ENCODE measurements at regions of chr13 and their contacts with region 1.

Region 1: GRCh38 chr13:44484562-44485138 is 91.5 kb downstream of the TSC22D1 start:
- DNase-seq: no peak
- H3K4me3 ChIP-seq: no peak overlapping the region
- CTCF ChIP-seq: no peak

Region 2: GRCh38 chr13:43730642-43731041 is 754.0 kb before region 1 on chr13:
- CTCF ChIA-PET with region 1: no interaction called
- POLR2A ChIA-PET with region 1: no interaction called
- DNase-seq: peak; percentile 23
- H3K4me3 ChIP-seq: no peak overlapping the region
- CTCF ChIP-seq: no peak

Region 3: DNA sequence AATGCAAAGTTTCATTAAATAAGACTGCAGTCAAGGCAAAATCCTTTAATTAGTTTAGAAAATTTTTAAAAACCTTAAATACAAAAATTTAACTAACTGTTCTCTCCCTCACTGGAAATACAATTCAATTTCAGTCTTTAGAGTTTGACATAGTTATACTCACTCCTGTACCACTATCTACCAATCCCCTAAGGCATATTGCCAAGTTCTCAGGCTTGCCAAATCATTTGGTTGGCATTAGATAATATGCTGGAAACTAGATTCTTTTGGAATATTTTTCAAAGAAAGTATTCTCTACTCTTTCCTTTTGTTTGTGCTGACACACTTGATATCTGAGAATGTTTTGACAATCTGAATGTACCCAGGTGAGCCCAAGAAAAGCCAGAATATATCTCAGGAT is 14.3 kb after region 1 on chr13:
- CTCF ChIA-PET with region 1: interaction called, 22 read pairs
- POLR2A ChIA-PET with region 1: no interaction called
- DNase-seq: no peak
- H3K4me3 ChIP-seq: no peak overlapping the region
- CTCF ChIP-seq: no peak

Region 4: GRCh38 chr13:44739120-44739519 is 254.5 kb after region 1 on chr13:
- CTCF ChIA-PET with region 1: no interaction called
- POLR2A ChIA-PET with region 1: no interaction called
- DNase-seq: no peak
- H3K4me3 ChIP-seq: no peak overlapping the region
- CTCF ChIP-seq: no peak

Region 5: DNA sequence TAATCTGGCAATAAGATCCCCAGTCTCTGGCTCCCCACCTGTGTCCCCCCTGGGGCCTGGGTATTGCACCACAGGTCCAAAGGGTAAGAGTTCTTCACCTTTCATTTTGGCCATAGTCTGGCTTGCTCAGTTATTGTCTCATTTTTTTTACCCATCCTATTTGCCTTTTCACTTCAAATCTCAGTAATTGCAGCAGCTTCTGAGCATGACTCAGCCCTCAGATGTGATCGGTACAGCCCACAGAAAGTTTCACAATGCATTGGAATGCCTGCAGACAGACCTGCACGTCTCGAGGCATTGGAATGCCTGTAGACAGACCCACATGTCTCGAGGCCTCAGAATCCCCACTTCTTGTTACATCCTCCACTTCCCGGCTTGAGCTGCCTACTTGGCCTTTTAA is 331.0 kb after region 1 on chr13:
- CTCF ChIA-PET with region 1: interaction called, 15 read pairs
- POLR2A ChIA-PET with region 1: no interaction called
- DNase-seq: peak; percentile 90
- H3K4me3 ChIP-seq: no peak overlapping the region
- CTCF ChIP-seq: no peak

Region 6: GRCh38 chr13:44917589-44918325 is 433.1 kb after region 1 on chr13:
- CTCF ChIA-PET with region 1: interaction called, 13 read pairs
- POLR2A ChIA-PET with region 1: no interaction called
- DNase-seq: peak; percentile 87
- H3K4me3 ChIP-seq: peak overlapping the region; percentile 65
- CTCF ChIP-seq: peak; percentile 26

Region 7: DNA sequence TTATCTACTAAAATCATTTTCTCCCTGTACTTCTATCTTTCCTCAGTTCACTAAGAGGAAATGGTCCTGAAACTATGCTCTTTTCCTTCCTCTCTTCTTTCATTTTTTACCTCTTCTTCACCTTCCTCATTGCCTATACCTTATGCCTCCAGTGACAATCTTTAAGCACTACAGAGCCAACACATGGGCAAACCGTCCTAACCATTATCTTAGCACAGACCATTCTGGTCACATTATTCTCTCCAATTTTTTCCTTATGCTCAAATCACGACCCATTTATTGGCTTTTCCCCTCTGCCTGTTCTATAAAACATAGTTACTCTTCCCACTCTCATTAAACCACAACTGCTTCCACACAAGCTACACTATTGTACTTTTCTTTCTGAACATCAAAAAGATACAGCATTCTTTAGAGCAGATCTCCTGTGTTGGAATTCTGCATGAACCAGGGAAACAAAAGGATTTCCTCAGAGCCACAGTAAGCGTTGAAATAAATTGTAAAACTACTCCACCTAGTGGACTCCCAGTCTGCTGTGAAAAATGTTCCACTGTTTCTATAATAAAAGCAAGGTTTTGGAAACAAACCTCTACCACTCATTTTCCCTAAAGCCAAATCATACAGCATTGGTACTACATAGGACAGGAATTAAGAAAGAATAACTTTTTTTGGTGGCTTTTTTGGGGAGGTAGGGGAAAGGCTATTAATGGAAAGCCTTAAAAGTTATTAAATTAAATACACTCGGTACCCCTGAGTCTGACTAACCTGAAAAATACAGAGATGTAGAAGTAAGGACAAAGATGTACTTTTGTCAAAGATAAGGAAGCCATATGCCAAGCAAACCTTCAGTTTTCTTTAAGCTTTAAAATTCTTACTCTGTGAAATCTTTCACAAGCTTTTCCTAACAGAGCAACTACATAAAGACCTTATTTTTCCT is 485.2 kb after region 1 on chr13:
- CTCF ChIA-PET with region 1: interaction called, 142 read pairs
- POLR2A ChIA-PET with region 1: no interaction called
- DNase-seq: no peak
- H3K4me3 ChIP-seq: no peak overlapping the region
- CTCF ChIP-seq: peak; percentile 41

Measured in AG04449 (cell line).